Activated T-helper 2 cell treated with anti-CD3 and anti-CD28 coated beads, Interferon-gamma antibody, Interleukin-2, Interleukin-4, amounts not matched to agents 10 μg/mL and 5 μg/mL and 100 μg/mL, durations not matched to agents 14 hours and 24 hours and 36 hours (primary cell): ENCODE measurements at regions of chr9 and their contacts with region 1.

Region 1: DNA sequence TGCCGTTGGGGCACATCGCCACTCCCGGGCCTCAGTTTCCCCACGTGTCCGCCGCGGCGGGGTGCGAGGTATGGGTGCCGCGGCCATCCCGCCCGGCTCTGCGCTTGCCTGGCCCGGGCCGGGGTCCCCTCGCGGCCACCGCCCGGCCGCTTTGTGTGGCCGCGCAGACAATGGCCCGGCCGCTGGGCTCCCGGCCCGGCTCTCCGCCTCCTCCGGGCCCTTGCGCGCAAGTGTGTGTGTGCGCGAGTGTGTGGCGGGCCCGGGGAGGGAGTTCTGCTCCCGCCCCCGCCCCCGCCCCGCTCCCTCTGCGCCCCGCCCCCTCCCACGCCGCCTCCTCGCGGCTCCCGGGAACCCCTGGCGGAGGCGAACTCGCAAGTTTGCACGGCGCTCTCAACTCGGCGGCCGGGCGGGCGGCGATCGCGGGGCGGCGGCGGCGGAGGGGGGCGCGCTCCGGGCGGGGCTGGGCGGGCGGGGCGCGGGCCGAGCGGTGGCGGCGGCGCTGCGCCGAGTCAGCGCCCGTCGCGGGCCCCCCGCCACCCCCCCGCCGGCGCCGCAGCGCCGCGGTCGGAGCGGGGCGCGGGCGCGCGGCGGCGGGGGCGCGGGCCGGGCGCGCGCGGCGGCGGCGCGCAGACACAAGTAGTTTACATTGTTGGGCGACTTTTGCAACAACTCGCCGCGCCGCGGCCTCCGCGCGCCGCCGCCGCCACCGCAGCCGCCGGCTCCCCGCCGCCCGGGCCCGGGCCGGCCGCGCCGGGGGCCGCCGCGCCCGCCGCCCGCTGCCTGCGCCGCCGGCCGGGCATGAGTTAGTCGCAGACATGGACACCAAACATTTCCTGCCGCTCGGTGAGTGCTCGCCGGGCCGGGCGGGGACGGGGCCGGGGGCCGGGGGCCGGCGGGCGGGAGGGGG is at the start of gene RXRA:
- DNase-seq: peak; percentile 22
- H3K4me3 Mint-ChIP-seq: peak within 1 kb of the TSS; percentile 68
- H3K27ac Mint-ChIP-seq: no peak within 1 kb of the TSS
- H3K4me1 Mint-ChIP-seq: peaks cover 4% of the 10 kb centered on the region
- H3K27me3 Mint-ChIP-seq: peaks cover 27% of the 10 kb centered on the region
- total RNA-seq, gene RXRA: 22.8 and 22.9 TPM in 2 replicates

Region 2: DNA sequence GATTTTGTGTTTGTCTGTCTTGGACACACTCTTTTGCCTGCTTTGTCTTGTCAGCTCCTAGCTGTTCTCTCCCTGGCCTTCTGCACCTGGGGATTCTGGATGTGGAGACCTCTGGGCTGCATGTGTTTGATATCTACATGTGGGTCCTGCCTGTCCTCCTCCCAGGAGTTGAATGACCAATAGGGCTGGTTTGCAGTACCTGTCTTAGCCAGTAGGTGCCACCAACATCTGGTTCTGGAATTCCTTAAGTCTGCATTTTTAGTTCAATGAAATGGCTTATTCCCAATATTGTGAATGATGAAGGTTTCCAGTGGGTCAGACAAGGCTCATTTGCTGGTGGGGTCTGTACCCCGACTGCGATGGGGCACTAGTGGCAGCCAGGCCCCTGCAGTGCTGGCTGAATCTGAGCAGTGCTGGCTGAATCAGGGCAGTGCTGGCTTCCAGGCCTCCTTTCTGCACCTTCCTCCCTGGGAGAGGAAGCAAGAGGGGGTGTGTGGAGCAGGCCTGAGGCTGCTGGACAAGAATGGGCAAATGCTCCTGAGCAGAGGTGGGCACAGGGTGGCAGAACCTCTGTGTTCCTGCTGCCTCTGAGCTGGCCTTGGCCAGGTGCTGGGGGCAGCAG is 73.5 kb after region 1 on chr9:
- intact Hi-C with region 1: loop called (anchors 10 kb)
- DNase-seq: no peak
- H3K4me3 Mint-ChIP-seq: no peak overlapping the region
- H3K27ac Mint-ChIP-seq: no peak overlapping the region
- H3K4me1 Mint-ChIP-seq: peaks cover 36% of the 10 kb centered on the region
- H3K27me3 Mint-ChIP-seq: peaks cover 1% of the 10 kb centered on the region

Region 3: GRCh38 chr9:134434894-134435506 is 108.9 kb after region 1 on chr9:
- intact Hi-C with region 1: no loop called
- DNase-seq: no peak
- H3K4me3 Mint-ChIP-seq: no peak overlapping the region
- H3K27ac Mint-ChIP-seq: no peak overlapping the region
- H3K4me1 Mint-ChIP-seq: no peaks in the 10 kb centered on the region
- H3K27me3 Mint-ChIP-seq: peaks cover under 1% of the 10 kb centered on the region